Transverse colon (tissue), 4 donors: ENCODE measurements at regions of chr4 and their contacts with region 1.

Region 1: GRCh38 chr4:184122631-184123408 is 94.9 kb downstream of the ENPP6 start:
- DNase-seq: no peak
- H3K4me3 ChIP-seq: no peak overlapping the region
- H3K27ac ChIP-seq: no peak overlapping the region
- H3K4me1 ChIP-seq: no peaks in the 10 kb centered on the region
- H3K27me3 ChIP-seq: no peaks in the 10 kb centered on the region
- CTCF ChIP-seq: no peak
- EP300 ChIP-seq: no peak
- POLR2A ChIP-seq: no peak

Region 2: DNA sequence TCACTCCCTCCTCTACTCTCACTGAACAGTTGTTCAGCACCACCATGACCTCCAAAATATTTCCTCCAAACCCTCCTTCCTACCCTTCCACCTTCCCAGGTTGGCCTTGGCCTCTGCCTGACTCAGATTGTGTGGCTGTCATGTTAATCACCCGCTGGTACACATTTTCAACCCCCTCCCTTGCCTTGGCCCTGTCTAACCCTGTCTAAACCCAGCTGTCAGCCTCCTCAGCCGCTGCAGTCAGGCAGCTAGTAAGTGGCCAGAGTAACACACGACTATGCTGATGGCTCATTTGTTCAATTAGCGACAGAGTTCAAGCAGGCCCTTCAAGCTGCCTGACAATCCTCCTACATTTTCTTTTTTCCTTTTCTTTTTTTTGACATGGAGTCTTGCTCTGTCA is 600.0 kb before region 1 on chr4:
- in situ Hi-C with region 1: no loop called
- intact Hi-C with region 1: loop called (anchors 10 kb)
- DNase-seq: no peak
- H3K4me3 ChIP-seq: no peak overlapping the region
- H3K27ac ChIP-seq: no peak overlapping the region
- H3K4me1 ChIP-seq: no peaks in the 10 kb centered on the region
- H3K27me3 ChIP-seq: no peaks in the 10 kb centered on the region
- CTCF ChIP-seq: no peak
- EP300 ChIP-seq: no peak
- POLR2A ChIP-seq: no peak

Region 3: GRCh38 chr4:184263910-184264732 is 141.3 kb after region 1 on chr4:
- in situ Hi-C with region 1: no loop called
- intact Hi-C with region 1: no loop called
- DNase-seq: peak; percentile 96
- H3K4me3 ChIP-seq: no peak overlapping the region
- H3K27ac ChIP-seq: peak overlapping the region in 1 of 4 donors; percentile 14
- H3K4me1 ChIP-seq: peaks cover 0 to 5% (median 0%) of the 10 kb centered on the region in 4 donors
- H3K27me3 ChIP-seq: no peaks in the 10 kb centered on the region
- CTCF ChIP-seq: peak; percentile 89 to 97 (median 96)
- EP300 ChIP-seq: no peak
- POLR2A ChIP-seq: no peak